AG04450 (cell line): ENCODE measurements at regions of chr2 and their contacts with region 1.

Region 1: GRCh38 chr2:109180786-109181185 is 51.8 kb downstream of the SH3RF3 start:
- DNase-seq: no peak
- H3K4me3 ChIP-seq: no peak overlapping the region
- H3K27ac ChIP-seq: peak overlapping the region; percentile 35
- H3K27me3 ChIP-seq: no peaks in the 10 kb centered on the region
- CTCF ChIP-seq: no peak

Region 2: DNA sequence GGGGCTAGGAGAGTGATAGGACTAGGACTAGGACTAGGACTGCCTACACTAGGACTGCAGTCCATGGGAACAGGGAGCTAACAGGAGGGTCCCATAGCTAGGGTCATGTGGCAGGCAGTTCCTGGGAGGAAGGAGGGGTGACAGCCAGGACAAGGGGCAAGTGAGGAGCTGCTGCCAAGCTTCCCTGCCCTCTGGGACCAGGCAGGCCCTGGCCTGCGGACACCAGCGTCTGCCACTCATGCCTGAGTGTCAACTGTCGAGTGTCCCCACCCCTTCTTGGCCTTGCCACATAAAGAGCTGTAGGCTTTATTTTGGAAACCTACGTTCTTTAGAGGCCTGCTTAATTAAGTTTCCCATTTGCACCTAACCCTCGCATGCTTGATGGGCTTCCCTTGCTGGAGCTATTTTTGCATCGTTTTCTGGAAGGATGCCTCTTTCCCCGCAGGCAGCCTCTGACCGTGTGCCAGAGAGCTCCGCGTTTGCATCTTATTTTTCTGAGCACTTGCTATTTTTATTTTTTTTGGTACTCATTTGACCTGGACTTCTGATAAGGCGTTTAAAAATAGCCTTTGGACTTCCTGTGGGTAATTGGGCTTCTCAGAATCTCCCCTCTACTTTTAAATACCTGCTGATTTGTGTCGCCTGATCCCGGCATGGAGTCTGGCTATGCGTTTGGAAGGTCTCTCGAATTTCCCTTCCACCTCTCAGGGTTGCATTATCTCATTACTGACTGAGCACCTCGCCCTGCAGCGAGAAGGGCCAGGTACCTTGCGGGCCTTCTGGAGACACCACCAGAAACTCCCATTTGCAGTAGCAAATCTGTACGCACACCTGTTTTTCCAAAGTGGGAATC is 14.6 kb after region 1 on chr2:
- CTCF ChIA-PET with region 1: no interaction called
- POLR2A ChIA-PET with region 1: no interaction called
- DNase-seq: no peak
- H3K4me3 ChIP-seq: no peak overlapping the region
- H3K27ac ChIP-seq: no peak overlapping the region
- H3K27me3 ChIP-seq: no peaks in the 10 kb centered on the region
- CTCF ChIP-seq: no peak

Region 3: GRCh38 chr2:109279243-109279860 is 98.6 kb after region 1 on chr2:
- CTCF ChIA-PET with region 1: no interaction called
- POLR2A ChIA-PET with region 1: interaction called, 16 read pairs
- DNase-seq: no peak
- H3K4me3 ChIP-seq: no peak overlapping the region
- H3K27ac ChIP-seq: no peak overlapping the region
- H3K27me3 ChIP-seq: no peaks in the 10 kb centered on the region
- CTCF ChIP-seq: no peak